ENCODE measurements at regions of chr12 and their contacts with region 1.

Region 1: GRCh38 chr12:115341442-115341841 is 657.5 kb upstream of the TBX3 start:
- DNase-seq: peak; percentile 87 to 88
- ATAC-seq: peak; percentile 86
- H3K4me3 ChIP-seq: no peak overlapping the region
- H3K27ac ChIP-seq: no peak overlapping the region
- H3K4me1 ChIP-seq: no peaks in the 10 kb centered on the region
- H3K27me3 ChIP-seq: no peaks in the 10 kb centered on the region

Region 2: GRCh38 chr12:114684098-114684869 is 657.2 kb before region 1 on chr12 and contains the start of gene TBX3:
- intact Hi-C with region 1: loop called in 1 of 2 experiments (anchors 10 kb)
- DNase-seq: peak; percentile 92 to 95
- ATAC-seq: peak; percentile 93
- H3K4me3 ChIP-seq: peak within 1 kb of the TSS; percentile 59 to 60
- H3K27ac ChIP-seq: peak within 1 kb of the TSS in 1 of 2 donors; percentile 75
- H3K4me1 ChIP-seq: no peaks in the 10 kb centered on the region
- H3K27me3 ChIP-seq: peaks cover 0 to 2% of the 10 kb centered on the region in 2 donors
- total RNA-seq, gene TBX3: 3.7 to 6.8 TPM

Region 3: DNA sequence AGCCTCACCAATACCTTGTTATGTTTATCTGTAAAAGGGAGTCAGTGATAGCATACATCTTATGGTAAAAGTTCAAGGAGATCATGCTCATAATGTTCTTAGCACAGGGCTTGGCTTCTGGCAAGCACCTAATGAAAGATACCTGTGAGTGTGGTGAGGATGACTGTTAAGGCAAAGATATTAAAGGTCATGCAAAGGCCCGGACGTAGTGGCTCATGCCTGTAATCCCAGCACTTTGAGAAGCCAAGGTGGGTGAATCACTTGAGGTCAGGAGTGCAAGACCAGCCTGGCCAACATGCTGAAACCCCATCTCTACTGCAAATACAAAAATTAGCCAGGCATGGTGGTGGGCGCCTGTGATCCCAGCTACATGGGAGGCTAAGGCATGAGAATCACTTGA is 231.6 kb before region 1 on chr12:
- intact Hi-C with region 1: no loop called
- DNase-seq: no peak
- ATAC-seq: no peak
- H3K4me3 ChIP-seq: no peak overlapping the region
- H3K27ac ChIP-seq: no peak overlapping the region
- H3K4me1 ChIP-seq: no peaks in the 10 kb centered on the region
- H3K27me3 ChIP-seq: peaks cover 0 to 3% of the 10 kb centered on the region in 2 donors

Region 4: DNA sequence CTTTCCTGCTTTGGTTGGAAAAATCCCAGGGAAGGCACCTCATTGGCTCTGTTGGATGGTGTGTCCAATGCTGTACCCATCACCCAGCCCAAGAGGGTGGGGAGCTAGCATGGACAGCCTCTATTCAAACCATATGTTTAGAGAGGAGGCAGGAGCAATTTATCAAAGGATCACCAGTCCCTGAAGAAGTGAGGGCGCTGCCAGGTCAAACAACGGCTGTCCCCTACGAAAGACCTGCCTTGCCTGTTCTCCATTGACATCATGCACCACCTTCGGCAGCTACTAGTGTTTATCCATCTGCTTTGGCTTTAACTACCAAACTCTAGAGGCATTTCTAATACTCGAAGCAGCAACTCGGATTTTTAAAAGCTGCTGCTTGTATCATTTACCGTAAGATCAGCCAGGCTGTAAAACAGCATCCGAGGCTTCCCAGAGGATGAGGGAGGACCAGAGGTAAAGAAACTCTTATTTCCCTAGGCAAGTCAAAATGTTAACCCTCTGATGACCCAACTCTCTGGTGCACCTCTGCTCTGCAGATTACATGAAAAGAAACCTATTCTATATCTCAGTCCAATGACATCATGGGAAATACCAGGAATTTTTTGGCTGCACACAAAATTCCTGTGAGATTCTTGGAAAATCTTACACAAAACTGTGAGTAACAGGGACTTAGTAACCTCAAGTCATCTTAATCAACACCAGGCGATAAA is 63.5 kb after region 1 on chr12:
- intact Hi-C with region 1: loop called in 1 of 2 experiments (anchors 5 kb)
- DNase-seq: no peak
- ATAC-seq: peak; percentile 16
- H3K4me3 ChIP-seq: no peak overlapping the region
- H3K27ac ChIP-seq: peak overlapping the region in 1 of 2 donors; percentile 22
- H3K4me1 ChIP-seq: peaks cover 0 to 3% of the 10 kb centered on the region in 2 donors
- H3K27me3 ChIP-seq: no peaks in the 10 kb centered on the region